ENCODE measurements at regions of chr5 and their contacts with region 1.

Region 1: DNA sequence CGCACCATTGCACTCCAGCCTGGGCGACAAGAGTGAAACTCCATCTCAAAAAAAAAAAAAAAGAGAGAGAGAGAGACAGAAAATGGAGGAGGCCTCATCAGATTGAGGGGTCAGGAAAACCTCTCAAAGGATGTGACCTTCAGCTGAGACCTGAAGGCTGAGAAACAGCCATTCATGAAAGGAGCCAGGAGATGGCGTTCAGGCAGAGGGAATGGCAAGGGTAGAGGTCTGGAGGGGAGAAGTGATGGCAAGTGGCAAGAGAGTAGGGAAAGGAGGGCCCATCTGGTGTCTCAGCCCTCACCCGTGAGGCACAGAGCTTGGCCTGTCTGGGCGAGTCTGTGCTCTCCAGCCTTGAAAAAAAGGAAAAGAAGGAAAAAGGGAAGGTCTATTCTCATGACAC is 17.0 kb downstream of the CAMK2A start:
- DNase-seq: no peak
- ATAC-seq: peak; percentile 38

Region 2: GRCh38 chr5:150350524-150351344 is 78.2 kb after region 1 on chr5:
- intact Hi-C with region 1: loop called (anchors 5 kb)
- DNase-seq: peak; percentile 80
- ATAC-seq: peak; percentile 90